ENCODE measurements at regions of chr6 and their contacts with region 1.

Region 1: GRCh38 chr6:44312901-44313788 is at the start of gene AARS2:
- DNase-seq: peak; percentile 92
- H3K4me3 Mint-ChIP-seq: peak within 1 kb of the TSS; percentile 96
- H3K27ac Mint-ChIP-seq: peak within 1 kb of the TSS; percentile 84
- H3K4me1 Mint-ChIP-seq: peaks cover 18% of the 10 kb centered on the region
- H3K27me3 Mint-ChIP-seq: peaks cover 13% of the 10 kb centered on the region
- total RNA-seq, gene AARS2: 14.8 to 15.0 TPM

Region 2: DNA sequence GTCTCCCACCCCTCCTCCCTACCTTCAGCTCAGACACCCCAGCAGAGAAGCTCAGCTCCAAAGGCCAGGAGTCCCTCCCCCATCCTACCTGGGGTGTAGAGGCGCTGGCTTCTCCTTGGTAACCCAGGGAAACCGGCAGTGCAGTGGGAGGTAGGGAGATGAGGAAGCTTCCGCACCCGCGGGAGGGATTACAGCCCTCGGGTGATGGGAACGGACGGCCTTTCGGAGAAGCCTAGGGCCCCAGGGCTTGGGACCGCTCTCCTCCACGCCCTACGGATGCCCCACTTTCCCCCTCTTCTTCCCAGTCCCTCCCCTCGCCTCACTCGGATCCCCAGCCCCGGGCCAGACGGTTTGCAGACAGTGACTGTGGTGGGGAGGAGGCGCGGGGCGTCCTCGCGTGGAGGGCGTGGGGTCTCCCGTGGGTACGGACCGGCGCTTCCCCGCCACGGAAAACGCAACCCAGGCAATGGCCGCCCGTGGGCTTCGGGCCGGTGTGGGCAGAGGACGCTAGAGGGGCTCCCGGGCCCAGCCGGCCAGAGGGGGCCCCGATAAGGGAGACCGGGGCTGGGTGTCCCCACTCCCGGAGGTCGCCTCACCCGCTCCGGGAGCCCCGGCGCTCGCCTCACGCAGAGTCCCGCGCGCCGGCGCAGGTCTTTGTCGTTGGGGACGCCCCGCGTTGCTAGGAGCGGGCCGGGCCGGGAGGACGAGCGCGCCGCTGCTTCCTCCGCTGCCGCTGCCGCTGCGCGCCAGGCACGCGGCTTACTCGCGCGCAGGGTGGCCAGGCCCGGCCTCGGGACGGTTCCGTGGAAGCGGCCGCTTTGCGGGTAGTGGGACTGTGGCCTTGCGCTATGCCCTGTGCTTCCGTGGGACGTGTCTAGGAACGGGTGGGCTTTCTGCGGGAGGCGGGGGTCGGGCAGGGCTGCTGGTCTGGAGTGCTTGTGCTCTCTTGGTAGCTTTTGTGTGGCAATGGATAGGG is 15.8 kb before region 1 on chr6:
- CTCF ChIA-PET with region 1: interaction called, 14 read pairs
- POLR2A ChIA-PET with region 1: interaction called, 13 read pairs
- DNase-seq: peak; percentile 51
- H3K4me3 Mint-ChIP-seq: peak overlapping the region; percentile 4
- H3K27ac Mint-ChIP-seq: no peak overlapping the region
- H3K4me1 Mint-ChIP-seq: peaks cover 6% of the 10 kb centered on the region
- H3K27me3 Mint-ChIP-seq: peaks cover 42% of the 10 kb centered on the region

Region 3: DNA sequence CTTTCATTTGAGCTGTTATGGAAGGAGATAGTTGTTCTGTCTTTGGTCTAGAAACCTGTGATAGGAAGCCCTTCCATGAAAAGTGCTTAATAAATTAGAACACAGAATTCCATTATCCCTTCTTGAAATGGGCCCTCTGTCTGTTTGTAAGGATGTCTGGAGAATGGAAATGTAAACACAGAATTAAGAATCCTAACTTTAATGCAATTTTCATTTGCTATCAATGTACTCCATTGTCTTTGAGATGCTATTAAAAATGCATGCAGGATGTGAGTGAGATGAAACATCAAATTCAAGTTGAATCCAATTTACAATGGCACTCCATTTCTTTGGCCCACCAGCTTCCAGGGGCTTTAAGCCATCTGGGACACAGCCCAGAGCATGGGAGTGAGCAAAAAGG is 14.0 kb after region 1 on chr6:
- CTCF ChIA-PET with region 1: interaction called, 11 read pairs
- POLR2A ChIA-PET with region 1: interaction called, 4 read pairs
- DNase-seq: no peak
- H3K4me3 Mint-ChIP-seq: no peak overlapping the region
- H3K27ac Mint-ChIP-seq: no peak overlapping the region
- H3K4me1 Mint-ChIP-seq: no peaks in the 10 kb centered on the region
- H3K27me3 Mint-ChIP-seq: peaks cover 37% of the 10 kb centered on the region